ENCODE measurements at regions of chr5 and their contacts with region 1.

Region 1: GRCh38 chr5:116566251-116566650 is 8.4 kb downstream of the SEMA6A start:
- DNase-seq: no peak
- ATAC-seq: no peak
- H3K4me3 ChIP-seq: no peak overlapping the region
- H3K27ac ChIP-seq: no peak overlapping the region
- H3K4me1 ChIP-seq: no peaks in the 10 kb centered on the region
- H3K27me3 ChIP-seq: peaks cover 31% of the 10 kb centered on the region
- CTCF ChIP-seq: no peak

Region 2: GRCh38 chr5:116137544-116138378 is 428.5 kb before region 1 on chr5:
- CTCF ChIA-PET with region 1: no interaction called
- POLR2A ChIA-PET with region 1: no interaction called
- in situ Hi-C with region 1: no loop called
- intact Hi-C with region 1: loop called (anchors 10 kb)
- DNase-seq: peak; percentile 15
- ATAC-seq: no peak
- H3K4me3 ChIP-seq: no peak overlapping the region
- H3K27ac ChIP-seq: no peak overlapping the region
- H3K4me1 ChIP-seq: no peaks in the 10 kb centered on the region
- H3K27me3 ChIP-seq: no peaks in the 10 kb centered on the region
- CTCF ChIP-seq: peak; percentile 76; the same call in 1 of the 2 replicates

Region 3: DNA sequence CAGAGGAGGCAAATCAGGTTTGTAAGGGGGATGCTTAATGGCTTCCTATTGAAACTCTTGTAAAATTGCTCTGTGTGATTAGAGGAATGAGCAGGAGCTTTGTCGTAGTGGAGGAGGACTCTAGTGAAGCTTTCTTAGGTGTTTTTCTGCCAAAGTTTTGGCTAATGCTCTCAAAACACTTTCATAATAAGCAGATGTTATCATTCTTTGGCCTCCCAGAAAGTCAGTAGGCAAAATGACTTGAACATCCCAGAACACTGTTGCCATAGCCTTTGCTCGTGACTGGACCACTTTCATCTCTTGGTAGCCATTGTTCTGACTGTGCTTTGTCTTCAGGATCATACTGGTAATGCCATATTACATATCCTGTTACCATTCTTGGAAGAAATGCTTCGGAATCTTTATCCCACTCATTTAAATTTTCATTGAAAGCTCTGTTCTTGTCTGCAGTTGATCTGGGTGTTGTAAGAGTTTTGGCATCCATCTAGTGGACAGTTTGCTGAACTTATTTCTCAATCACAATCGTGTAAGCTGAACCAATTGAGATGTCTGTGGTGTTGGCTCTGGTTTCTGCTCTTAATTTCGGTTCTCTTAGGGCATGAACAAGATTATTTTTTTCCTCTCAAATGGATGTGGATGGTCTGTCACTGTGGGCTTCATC is 293.8 kb before region 1 on chr5:
- CTCF ChIA-PET with region 1: no interaction called
- POLR2A ChIA-PET with region 1: no interaction called
- in situ Hi-C with region 1: no loop called
- intact Hi-C with region 1: no loop called
- DNase-seq: no peak
- ATAC-seq: no peak
- H3K4me3 ChIP-seq: no peak overlapping the region
- H3K27ac ChIP-seq: no peak overlapping the region
- H3K4me1 ChIP-seq: no peaks in the 10 kb centered on the region
- H3K27me3 ChIP-seq: no peaks in the 10 kb centered on the region
- CTCF ChIP-seq: peak; percentile 6; the same call in 1 of the 2 replicates